CD14-positive monocyte (primary cell): ENCODE measurements at regions of chr20 and their contacts with region 1.

Region 1: DNA sequence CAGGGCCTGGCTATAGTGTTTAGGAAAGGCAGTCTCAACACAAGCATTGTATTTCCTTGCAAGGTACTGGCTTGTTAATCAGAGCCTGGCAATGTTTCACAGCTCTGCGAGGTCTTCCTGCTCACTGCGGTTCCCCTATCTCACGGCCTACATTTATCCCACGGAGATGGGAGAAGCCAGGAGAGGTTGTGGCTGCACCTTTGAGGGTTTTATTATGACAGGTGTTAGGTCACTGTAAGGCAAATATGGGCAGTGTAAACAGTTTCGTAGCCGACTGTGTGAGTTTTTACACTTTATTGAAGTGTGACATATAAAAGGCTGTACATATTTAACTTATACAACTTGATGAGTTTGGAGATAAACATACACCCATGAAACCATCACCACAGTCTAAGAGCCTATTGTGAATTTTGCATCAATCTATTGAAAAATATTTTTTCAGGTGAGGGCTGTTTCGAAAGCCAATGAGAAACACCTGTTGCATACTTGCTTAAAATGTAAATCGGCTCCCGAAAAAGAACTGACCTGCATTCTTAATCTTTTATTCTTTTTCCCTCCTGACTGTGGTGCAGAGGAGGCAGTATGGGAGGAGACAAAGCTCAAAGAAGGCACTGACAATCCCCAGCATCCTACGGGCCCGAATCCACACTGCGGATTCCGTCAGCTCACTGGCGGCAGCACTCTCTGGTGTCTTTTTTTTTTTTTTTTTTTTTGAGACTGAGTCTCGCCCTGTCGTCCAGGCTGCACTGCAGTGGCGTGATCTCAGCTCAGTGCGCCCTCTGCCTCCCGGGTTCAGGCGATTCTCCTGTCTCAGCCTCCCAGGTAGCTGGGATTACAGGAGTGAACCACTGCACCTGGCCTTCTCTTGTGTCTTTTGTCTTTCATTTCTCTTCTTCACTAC is 7.5 kb upstream of the RBM38 start:
- DNase-seq: no peak
- H3K4me3 ChIP-seq: no peak overlapping the region
- H3K4me3 Mint-ChIP-seq: peak overlapping the region in 1 of 2 donors; percentile 7
- H3K27ac ChIP-seq: no peak overlapping the region
- H3K27ac Mint-ChIP-seq: no peak overlapping the region
- H3K4me1 ChIP-seq: peaks cover 7 to 12% of the 10 kb centered on the region in 2 donors
- H3K4me1 Mint-ChIP-seq: peaks cover 15% of the 10 kb centered on the region
- H3K27me3 ChIP-seq: no peaks in the 10 kb centered on the region
- H3K27me3 Mint-ChIP-seq: peaks cover 0 to 14% (median 7%) of the 10 kb centered on the region in 3 donors
- CTCF ChIP-seq: no peak

Region 2: DNA sequence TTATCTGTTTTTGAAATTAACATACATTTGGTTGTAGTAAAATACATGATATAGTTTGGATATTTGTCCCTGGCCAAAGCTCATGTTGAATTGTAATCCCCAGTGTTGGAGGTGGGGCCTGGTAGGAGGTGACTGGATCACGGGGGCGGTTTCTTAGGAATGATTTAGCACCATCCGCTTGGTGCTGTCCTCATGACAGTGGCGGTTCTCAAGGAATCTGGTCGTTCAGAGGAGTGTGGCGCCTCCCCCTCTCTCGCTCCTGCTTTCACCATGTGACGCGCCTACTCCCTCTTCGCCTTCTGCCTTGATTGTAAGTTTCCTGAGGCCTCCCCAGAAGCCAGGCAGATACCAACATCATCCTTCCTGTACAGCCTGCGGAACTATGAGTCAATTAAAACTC is 112.3 kb after region 1 on chr20:
- intact Hi-C with region 1: loop called (anchors 1 to 2 kb)
- DNase-seq: no peak
- H3K4me3 ChIP-seq: no peak overlapping the region
- H3K4me3 Mint-ChIP-seq: peak overlapping the region in 1 of 2 donors; percentile 76
- H3K27ac ChIP-seq: no peak overlapping the region
- H3K27ac Mint-ChIP-seq: no peak overlapping the region
- H3K4me1 ChIP-seq: peaks cover 21 to 23% of the 10 kb centered on the region in 2 donors
- H3K4me1 Mint-ChIP-seq: peaks cover 22% of the 10 kb centered on the region
- H3K27me3 ChIP-seq: peaks cover 22 to 35% of the 10 kb centered on the region in 2 donors
- H3K27me3 Mint-ChIP-seq: peaks cover 36 to 47% (median 38%) of the 10 kb centered on the region in 3 donors
- CTCF ChIP-seq: no peak